GM12878 (cell line): ENCODE measurements at regions of chr15 and their contacts with region 1.

Region 1: DNA sequence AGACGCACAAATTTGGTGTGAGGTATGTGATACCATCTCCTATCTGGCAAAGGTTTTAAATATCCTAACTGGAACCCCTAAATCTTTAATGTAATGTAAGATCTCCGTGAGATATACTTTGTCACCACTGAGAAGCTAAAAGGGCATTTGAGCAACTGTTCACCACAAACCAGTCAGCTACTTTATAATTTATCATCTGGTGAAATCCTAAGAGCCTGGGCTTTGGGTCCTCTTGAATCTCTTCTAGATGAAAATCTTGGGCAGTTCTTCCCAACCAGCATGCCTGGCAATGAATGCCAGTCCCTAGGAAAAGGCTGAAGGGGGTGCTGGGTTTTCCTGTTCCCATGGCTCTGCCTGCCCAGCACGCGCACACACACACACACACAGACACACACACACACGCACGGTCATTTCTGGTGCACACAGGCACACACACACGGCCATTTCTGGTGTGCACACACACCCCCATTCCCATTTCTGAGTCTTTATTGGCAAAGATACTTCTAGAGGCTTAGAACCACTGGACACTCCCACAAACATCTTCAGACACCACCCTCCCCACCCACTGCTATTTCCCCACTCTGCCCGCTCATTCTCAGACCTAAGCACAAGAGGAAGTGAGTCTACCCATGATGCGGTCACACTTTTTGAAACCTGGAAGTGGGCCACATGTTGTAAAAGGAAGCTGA is 72.6 kb downstream of the MYO1E start:
- DNase-seq: peak; percentile 97
- ATAC-seq: peak; percentile 77
- H3K4me3 ChIP-seq: peak overlapping the region; percentile 8; the same call in 1 of the 2 replicates
- H3K27ac ChIP-seq: peak overlapping the region; percentile 96
- H3K4me1 ChIP-seq: peaks cover 82% of the 10 kb centered on the region
- H3K27me3 ChIP-seq: no peaks in the 10 kb centered on the region
- CTCF ChIP-seq: no peak
- EP300 ChIP-seq: peak; percentile 62 to 87; a peak in 3 of 4 replicates
- POLR2A ChIP-seq: no peak
- RAD21 ChIP-seq: 0 out of 2 replicates have a peak, but pooled peaks have one; percentile 16

Region 2: DNA sequence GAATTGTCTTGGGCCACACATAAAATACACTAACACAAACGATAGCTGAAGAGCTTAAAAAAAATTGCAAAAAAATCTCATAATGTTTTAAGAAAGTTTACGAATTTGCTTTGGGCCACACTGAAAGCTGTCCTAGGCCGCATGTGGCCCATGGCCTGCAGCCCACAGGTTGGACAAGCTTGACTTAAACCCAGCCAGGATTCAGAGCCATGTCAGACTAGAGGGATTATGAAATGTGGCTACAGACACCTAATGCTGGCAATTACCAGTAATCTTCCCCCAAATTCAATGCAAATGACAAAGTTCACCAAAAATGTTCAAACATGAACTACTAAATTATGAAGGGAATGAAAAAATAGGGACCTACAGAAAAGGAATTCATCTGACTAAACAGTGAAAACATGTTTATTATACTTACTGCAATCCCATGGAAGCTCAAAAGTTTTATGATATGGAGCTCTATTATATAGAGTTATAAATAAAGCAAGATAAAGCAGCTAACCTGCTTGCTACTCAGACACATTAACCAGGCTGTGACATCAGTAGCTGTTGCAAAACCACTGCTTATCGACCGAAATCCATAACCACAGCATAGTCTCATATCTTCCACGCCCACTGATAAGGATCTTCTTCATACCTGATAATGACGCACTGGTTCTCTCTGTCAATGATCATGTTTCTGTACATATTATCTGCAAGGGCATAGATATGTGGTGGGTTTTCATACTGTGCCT is 44.3 kb before region 1 on chr15:
- CTCF ChIA-PET with region 1: interaction called, 5 read pairs
- POLR2A ChIA-PET with region 1: interaction called, 3 read pairs
- RAD21 ChIA-PET with region 1: interaction called, 6 read pairs
- SMC1A ChIA-PET with region 1: interaction called, 19 read pairs
- in situ Hi-C with region 1: no loop called
- intact Hi-C with region 1: loop called (anchors 2 kb)
- DNase-seq: no peak
- ATAC-seq: peak; percentile 69
- H3K4me3 ChIP-seq: no peak overlapping the region
- H3K27ac ChIP-seq: no peak overlapping the region
- H3K4me1 ChIP-seq: peaks cover 16% of the 10 kb centered on the region
- H3K27me3 ChIP-seq: no peaks in the 10 kb centered on the region
- CTCF ChIP-seq: no peak
- EP300 ChIP-seq: peak; percentile 77 to 79; a peak in 2 of 4 replicates
- POLR2A ChIP-seq: no peak
- RAD21 ChIP-seq: no peak

Region 3: DNA sequence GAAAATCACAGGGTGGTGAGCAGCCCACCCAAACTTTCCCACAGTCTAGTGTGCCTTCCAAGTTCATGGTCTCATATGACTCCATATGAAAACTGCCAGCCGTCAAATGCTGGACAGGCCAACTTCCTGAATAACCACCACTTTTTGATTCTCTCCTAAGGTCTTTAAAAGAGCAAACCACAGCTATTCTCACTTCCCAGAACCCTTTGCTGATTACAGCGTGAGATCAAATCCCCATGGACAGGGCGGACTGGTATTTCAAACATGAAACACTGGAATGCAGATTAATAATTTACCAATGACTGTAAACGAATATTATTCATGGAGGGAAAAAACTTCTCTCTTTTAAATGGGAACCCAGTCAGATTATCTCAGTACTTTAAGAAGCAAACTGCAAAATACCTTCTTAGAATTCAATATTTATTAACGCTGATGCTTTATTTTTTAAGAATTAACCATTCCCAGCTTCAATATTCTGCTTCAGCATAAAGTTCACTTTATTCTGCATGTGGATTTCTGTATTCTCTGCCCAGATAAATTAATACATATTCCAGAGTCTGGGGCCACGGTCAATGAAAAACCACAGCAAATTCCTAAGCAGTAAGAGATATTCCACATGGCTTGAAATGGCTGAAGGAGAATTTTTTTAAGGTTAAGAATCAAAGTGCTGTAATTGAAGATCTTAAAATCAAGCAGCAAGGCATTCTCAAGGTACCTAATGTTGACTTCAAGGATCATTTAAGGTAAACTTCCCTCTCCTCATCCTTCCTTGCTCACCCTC is 29.7 kb after region 1 on chr15:
- CTCF ChIA-PET with region 1: interaction called, 5 read pairs
- POLR2A ChIA-PET with region 1: interaction called, 3 read pairs
- RAD21 ChIA-PET with region 1: interaction called, 29 read pairs
- SMC1A ChIA-PET with region 1: interaction called, 23 read pairs
- in situ Hi-C with region 1: no loop called
- intact Hi-C with region 1: loop called (anchors 2 kb)
- DNase-seq: no peak
- ATAC-seq: no peak; the same call in 2 of the 3 replicates
- H3K4me3 ChIP-seq: no peak overlapping the region
- H3K27ac ChIP-seq: peak overlapping the region; percentile 48; the same call in 1 of the 2 replicates
- H3K4me1 ChIP-seq: peaks cover 80% of the 10 kb centered on the region
- H3K27me3 ChIP-seq: no peaks in the 10 kb centered on the region
- CTCF ChIP-seq: no peak
- EP300 ChIP-seq: no peak
- POLR2A ChIP-seq: no peak
- RAD21 ChIP-seq: no peak

Region 4: DNA sequence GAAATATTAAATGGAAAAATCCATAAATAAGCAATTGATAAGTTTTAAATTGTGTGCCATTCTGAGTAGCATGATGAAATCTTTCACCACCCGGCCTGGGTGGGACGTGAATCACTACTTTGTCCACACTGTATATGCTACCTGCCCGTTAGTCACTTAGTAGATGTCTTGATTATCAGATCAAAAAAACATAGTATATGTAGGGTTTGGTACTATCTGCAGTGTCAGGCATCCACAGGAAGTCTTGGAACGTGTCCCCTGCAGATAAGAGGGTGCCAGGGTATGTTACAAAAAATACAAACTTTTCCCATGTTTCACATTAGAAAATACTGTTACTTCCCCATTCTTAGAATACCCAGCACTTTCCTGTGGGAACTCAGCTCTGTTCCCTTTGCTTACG is 173.2 kb after region 1 on chr15:
- CTCF ChIA-PET with region 1: no interaction called
- POLR2A ChIA-PET with region 1: no interaction called
- RAD21 ChIA-PET with region 1: no interaction called
- SMC1A ChIA-PET with region 1: no interaction called
- in situ Hi-C with region 1: loop called (anchors 5 kb)
- intact Hi-C with region 1: no loop called
- DNase-seq: no peak
- ATAC-seq: no peak
- H3K4me3 ChIP-seq: no peak overlapping the region
- H3K27ac ChIP-seq: no peak overlapping the region
- H3K4me1 ChIP-seq: no peaks in the 10 kb centered on the region
- H3K27me3 ChIP-seq: no peaks in the 10 kb centered on the region
- CTCF ChIP-seq: no peak
- EP300 ChIP-seq: no peak
- POLR2A ChIP-seq: no peak
- RAD21 ChIP-seq: no peak

Region 5: DNA sequence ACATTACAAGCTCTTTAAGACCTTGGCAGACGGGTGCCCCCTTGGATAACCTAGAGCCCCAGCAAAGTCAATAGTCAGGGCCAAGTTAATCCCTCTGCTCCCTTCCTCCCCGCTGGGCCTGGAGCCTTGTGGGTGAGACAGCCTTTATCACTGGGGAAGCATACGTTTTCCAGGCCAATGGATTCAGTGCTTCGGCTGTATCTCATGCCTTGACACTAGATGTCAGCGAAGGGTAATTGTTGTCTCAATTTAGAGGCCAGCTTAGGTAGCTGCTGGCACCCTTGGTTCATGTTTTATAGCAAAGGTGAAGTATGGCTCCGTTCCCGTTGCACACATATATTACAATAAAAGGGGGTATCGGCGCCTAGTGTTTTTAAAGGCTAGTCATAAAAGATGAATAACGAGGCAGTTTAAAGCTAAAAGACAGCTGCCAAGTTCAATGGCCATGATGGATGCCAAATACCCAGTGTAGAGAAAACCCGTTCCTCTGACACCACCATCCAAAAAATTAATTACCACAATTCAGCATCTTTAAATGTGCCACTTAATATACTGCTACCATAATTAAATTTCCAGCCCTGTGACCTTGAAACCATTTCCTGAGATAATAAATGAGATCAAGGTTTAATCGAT is 441.3 kb after region 1 on chr15:
- CTCF ChIA-PET with region 1: no interaction called
- POLR2A ChIA-PET with region 1: no interaction called
- RAD21 ChIA-PET with region 1: no interaction called
- SMC1A ChIA-PET with region 1: no interaction called
- in situ Hi-C with region 1: no loop called
- intact Hi-C with region 1: no loop called
- DNase-seq: no peak
- ATAC-seq: no peak
- H3K4me3 ChIP-seq: no peak overlapping the region
- H3K27ac ChIP-seq: no peak overlapping the region
- H3K4me1 ChIP-seq: no peaks in the 10 kb centered on the region
- H3K27me3 ChIP-seq: no peaks in the 10 kb centered on the region; a peak in 1 of 4 replicates
- CTCF ChIP-seq: peak; percentile 12 to 21 (median 17); a peak in 2 of 6 replicates
- EP300 ChIP-seq: no peak
- POLR2A ChIP-seq: no peak
- RAD21 ChIP-seq: peak; percentile 28